Endothelial cell of umbilical vein (primary cell): ENCODE measurements at regions of chr2 and their contacts with region 1.

Region 1: DNA sequence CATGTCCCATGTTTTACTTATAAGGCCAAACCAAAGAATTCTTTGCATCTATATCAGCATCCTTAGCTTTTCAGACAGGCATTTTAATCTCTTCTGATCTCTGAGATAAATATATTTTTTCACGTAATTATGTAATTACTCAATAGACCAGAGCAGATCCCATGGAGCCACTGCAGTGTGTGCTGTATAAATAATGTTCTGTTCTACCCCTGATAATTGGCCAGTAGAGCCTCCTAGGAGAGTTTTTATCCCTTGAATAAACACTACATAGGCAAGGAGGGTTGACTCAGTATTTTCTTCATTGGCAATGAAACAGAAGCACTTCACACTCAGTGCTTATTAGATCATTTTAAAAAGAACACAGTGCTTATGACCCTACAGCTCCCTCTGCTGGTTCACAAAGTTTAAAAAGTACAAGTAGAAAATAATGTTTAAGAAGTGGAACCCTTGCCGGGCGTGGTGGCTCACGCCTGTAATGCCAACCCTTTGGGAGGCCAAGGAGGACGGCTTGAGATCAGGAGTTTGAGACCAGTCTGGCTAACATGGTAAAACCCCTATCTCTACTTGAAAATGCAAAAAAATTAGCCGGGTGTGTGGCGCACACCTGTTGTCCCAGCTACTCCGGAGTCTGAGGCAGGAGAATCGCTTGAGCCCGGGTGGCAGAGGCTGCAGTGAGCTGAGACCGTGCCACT is 91.9 kb downstream of the PPP1R1C start:
- DNase-seq: peak; percentile 84
- H3K4me3 ChIP-seq: no peak overlapping the region
- H3K27ac ChIP-seq: no peak overlapping the region
- H3K4me1 ChIP-seq: peaks cover 3% of the 10 kb centered on the region
- H3K27me3 ChIP-seq: no peaks in the 10 kb centered on the region
- CTCF ChIP-seq: peak; percentile 40 to 45
- POLR2A ChIP-seq: no peak

Region 2: DNA sequence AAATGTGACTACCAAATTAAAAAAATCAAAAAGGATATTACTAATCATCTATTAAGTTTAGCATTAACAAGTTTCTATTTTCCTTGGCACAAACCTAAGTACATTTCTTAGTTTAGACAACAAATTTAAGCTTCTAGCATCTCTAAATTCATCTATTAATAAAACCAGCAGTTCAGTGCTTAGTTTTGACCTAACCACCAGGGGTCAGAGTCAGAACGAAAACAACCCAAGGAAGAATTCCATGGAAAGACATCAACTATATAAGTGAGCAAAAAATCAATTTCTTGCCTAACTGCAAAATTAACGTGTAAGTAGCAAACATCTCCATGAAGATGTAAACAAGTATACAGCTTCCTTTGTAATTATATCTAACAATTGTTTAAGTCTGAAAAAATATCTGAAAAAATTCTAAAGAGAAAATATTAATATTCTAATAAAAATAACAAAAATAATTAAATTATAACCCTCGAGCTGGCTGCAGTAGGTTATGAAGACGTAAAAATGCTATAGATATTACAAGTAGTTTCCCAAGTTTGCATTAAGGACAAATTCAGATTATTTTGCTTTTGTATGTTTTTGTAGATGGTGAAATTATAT is 504.4 kb before region 1 on chr2:
- CTCF ChIA-PET with region 1: interaction called, 29 read pairs
- POLR2A ChIA-PET with region 1: no interaction called
- dilution Hi-C with region 1: no loop called
- intact Hi-C with region 1: loop called (anchors 1 kb)
- DNase-seq: peak; percentile 38
- H3K4me3 ChIP-seq: no peak overlapping the region
- H3K27ac ChIP-seq: no peak overlapping the region
- H3K4me1 ChIP-seq: no peaks in the 10 kb centered on the region
- H3K27me3 ChIP-seq: peaks cover 4 to 12% of the 10 kb centered on the region in 2 experiments
- CTCF ChIP-seq: peak; percentile 18 to 31
- POLR2A ChIP-seq: no peak

Region 3: GRCh38 chr2:181742922-181743722 is 334.5 kb before region 1 on chr2:
- CTCF ChIA-PET with region 1: interaction called, 69 read pairs
- POLR2A ChIA-PET with region 1: no interaction called
- dilution Hi-C with region 1: no loop called
- intact Hi-C with region 1: loop called (anchors 1 kb)
- DNase-seq: peak; percentile 83
- H3K4me3 ChIP-seq: no peak overlapping the region
- H3K27ac ChIP-seq: peak overlapping the region; percentile 34
- H3K4me1 ChIP-seq: peaks cover 15% of the 10 kb centered on the region
- H3K27me3 ChIP-seq: no peaks in the 10 kb centered on the region
- CTCF ChIP-seq: peak; percentile 37 to 39
- POLR2A ChIP-seq: no peak

Region 4: GRCh38 chr2:181937473-181937872 is 140.1 kb before region 1 on chr2:
- CTCF ChIA-PET with region 1: interaction called, 12 read pairs
- POLR2A ChIA-PET with region 1: no interaction called
- dilution Hi-C with region 1: no loop called
- intact Hi-C with region 1: no loop called
- DNase-seq: no peak
- H3K4me3 ChIP-seq: no peak overlapping the region
- H3K27ac ChIP-seq: no peak overlapping the region
- H3K4me1 ChIP-seq: no peaks in the 10 kb centered on the region
- H3K27me3 ChIP-seq: no peaks in the 10 kb centered on the region
- CTCF ChIP-seq: no peak
- POLR2A ChIP-seq: no peak

Region 5: DNA sequence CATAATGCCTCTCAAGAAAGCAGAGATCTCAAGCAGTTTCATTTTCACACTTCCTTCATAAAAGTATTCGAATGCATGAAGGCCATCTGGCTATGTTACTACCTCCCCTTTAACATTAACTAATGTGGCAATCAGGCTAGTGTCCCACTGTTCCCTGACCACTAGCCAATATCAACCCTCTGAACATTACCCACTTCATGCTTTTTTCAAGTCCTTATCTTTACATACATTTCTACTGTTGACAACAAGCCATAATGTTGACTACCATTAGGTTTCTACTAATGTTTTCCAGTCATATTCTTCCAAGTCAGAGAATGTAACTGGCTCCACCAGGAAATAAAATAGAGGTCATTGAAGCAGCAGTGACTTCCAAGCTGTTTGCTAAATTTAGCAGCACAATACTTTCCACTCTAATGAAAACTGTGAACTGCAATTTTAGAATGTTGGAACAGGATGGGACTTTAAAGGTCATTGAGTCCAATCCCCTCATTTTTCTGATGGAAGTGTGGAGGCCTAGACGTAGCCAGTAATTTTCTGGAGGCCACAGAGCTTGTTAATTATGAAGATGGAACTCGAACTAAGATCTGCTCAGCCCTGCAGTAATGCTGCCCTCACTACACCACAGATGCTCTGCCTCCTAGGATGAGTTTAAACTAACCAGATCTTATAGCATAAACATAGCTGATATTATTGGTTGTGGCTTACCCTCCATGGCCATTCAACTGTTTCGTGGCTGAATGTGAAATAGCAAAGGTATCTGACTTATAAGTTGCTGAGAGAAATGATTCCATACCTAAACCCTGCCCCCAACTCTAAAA is 92.6 kb before region 1 on chr2:
- CTCF ChIA-PET with region 1: no interaction called
- POLR2A ChIA-PET with region 1: no interaction called
- dilution Hi-C with region 1: no loop called
- intact Hi-C with region 1: no loop called
- DNase-seq: no peak
- H3K4me3 ChIP-seq: no peak overlapping the region
- H3K27ac ChIP-seq: no peak overlapping the region
- H3K4me1 ChIP-seq: no peaks in the 10 kb centered on the region
- H3K27me3 ChIP-seq: no peaks in the 10 kb centered on the region
- CTCF ChIP-seq: no peak
- POLR2A ChIP-seq: no peak

Region 6: DNA sequence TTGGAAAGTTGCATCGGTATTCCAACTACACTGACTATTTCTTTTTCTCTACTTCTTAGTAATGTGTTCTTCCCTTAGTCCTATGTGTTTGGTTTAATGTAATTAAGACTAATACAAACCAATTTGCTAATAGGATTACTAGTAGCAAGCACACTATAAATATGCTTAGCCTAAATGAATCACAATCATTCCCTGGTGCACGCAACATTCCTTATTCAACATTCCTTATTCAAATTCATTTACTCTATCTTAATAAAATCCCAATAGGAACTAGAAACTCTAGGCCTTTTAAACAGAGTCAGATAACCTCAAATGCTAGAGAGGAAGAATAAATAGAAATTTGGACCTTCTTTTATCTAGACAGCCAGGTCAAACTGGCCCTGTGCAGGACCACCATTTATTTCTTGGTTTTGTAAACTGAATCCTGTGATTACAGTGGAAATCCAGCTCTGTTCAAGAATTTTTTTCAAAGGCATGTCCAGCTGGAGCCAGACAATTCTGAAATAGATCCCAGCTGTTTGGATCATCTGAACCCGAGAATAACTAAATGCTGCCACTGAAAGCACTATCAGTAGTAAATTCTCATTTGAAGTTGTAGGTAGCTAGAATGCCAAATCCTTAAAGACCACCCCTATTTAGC is 11.2 kb after region 1 on chr2:
- CTCF ChIA-PET with region 1: interaction called, 33 read pairs
- POLR2A ChIA-PET with region 1: no interaction called
- dilution Hi-C with region 1: no loop called
- intact Hi-C with region 1: no loop called
- DNase-seq: no peak
- H3K4me3 ChIP-seq: no peak overlapping the region
- H3K27ac ChIP-seq: no peak overlapping the region
- H3K4me1 ChIP-seq: peaks cover 3% of the 10 kb centered on the region
- H3K27me3 ChIP-seq: no peaks in the 10 kb centered on the region
- CTCF ChIP-seq: no peak
- POLR2A ChIP-seq: no peak